BJ (cell line): ENCODE measurements at regions of chr7 and their contacts with region 1.

Region 1: DNA sequence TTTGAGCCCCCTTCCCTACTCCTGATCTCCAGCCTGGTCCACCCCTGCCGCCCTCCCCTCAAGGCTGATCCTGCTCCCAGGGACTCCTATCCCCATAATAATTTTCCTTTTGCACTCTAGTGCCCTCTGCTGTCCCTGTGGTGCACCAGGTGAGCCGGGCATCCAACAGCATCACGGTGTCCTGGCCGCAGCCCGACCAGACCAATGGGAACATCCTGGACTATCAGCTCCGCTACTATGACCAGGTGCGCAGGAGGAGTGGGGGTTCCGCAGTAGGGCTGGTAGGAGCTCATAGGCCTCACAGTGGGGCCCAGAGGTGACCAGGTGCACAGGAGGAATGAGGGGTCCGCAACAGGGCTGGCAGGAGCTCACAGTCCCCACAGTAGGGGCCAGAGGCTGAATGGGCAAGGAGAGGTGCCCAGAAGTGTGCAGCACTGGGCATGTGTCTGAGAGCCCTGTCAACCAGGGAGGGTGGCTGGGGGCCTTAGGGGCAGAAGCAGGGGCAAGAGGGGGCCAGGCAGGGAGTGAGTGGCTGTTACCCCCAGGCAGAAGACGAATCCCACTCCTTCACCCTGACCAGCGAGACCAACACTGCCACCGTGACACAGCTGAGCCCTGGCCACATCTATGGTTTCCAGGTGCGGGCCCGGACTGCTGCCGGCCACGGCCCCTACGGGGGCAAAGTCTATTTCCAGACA is 11.6 kb downstream of the EPHB6 start:
- DNase-seq: no peak
- H3K4me3 ChIP-seq: no peak overlapping the region
- H3K27me3 ChIP-seq: no peaks in the 10 kb centered on the region; the same call in 1 of the 2 replicates
- CTCF ChIP-seq: peak; percentile 70

Region 2: GRCh38 chr7:142827951-142828500 is 38.5 kb before region 1 on chr7:
- CTCF ChIA-PET with region 1: no interaction called
- POLR2A ChIA-PET with region 1: no interaction called
- DNase-seq: no peak
- H3K4me3 ChIP-seq: no peak overlapping the region
- H3K27me3 ChIP-seq: no peaks in the 10 kb centered on the region; the same call in 1 of the 2 replicates
- CTCF ChIP-seq: no peak

Region 3: GRCh38 chr7:142853739-142854371 is 12.7 kb before region 1 on chr7:
- CTCF ChIA-PET with region 1: interaction called, 11 read pairs
- POLR2A ChIA-PET with region 1: no interaction called
- DNase-seq: no peak
- H3K4me3 ChIP-seq: peak overlapping the region; percentile 55
- H3K27me3 ChIP-seq: peaks cover 7% of the 10 kb centered on the region
- CTCF ChIP-seq: peak; percentile 83